ENCODE measurements at regions of chr15 and their contacts with region 1.

Region 1: GRCh38 chr15:70111203-70112073 is 13.7 kb upstream of the TLE3 start:
- DNase-seq: peak in 1 of 2 donors; percentile 44
- H3K4me3 ChIP-seq: peak overlapping the region in 2 of 3 donors; percentile 8 to 46
- H3K27ac ChIP-seq: peak overlapping the region; percentile 79 to 91
- H3K4me1 ChIP-seq: peaks cover 0 to 5% of the 10 kb centered on the region in 2 donors
- H3K27me3 ChIP-seq: no peaks in the 10 kb centered on the region
- CTCF ChIP-seq: no peak
- POLR2A ChIP-seq: no peak

Region 2: DNA sequence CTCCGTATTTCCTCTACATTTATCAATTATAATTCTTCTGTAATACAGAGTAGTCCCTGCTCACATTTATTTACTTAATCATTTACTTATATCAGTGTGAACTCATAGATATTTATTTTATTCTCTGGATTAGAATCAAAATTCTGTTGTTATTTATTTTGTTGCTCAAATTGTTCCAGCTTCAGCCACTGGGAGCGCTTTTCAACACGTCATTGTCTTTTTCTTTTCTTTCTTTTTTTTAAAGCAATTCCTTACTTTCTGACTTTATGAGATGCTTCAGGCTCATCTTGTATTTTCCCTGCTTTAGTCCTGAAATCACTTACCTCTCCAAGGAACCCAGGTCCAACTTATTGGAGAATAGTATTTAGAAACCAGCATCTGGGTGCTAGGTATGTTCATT is 897.7 kb before region 1 on chr15:
- intact Hi-C with region 1: no loop called
- DNase-seq: no peak
- H3K4me3 ChIP-seq: no peak overlapping the region
- H3K27ac ChIP-seq: no peak overlapping the region
- H3K4me1 ChIP-seq: no peaks in the 10 kb centered on the region
- H3K27me3 ChIP-seq: no peaks in the 10 kb centered on the region
- CTCF ChIP-seq: no peak
- POLR2A ChIP-seq: no peak

Region 3: DNA sequence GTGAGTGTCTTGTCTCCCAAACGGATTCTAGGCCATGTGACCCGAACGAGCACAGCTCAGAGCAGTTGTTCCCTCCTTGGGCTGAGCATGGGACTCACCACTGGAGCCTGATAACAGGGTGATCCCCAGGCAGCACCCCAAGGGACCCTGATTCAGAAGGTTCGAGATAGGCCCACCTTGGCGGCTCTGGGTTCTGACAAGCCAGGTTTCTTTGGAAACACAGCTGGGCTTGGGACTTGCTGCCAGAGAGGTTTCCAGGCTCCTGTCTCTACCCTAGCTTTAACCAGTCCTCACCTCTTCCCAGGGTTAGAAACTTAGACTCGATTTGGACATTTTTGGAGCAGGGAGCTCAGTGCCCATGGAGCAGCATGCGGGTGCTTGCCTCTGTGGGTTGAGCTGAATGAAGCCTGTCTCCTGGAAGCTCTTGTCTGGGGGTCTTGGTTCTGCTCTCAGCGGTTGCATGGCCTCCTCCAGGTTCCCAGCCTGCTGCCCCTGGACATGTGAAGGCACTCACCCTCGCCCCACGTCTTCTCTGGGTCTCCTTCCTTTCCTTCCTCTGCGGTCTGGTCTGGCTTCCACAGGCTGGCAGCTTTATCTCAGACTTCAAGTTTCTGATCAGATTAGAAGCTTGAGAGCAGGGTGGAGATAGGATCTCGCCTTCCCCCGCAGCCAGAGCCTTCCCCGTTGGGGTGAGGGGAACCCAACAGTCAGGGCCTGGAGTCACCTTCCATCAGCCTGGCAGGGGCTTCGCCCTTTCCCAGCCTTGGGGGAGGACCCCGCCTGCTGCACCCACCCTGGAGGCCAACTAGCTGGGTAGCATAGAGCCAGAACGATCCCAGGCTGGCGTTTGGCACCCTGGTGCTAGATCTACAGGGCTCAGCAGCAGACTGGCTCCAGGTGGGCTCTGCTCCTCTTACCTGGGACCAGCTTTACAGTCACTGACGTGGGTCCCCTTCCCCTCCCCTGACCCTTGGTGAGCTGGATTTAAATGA is 791.8 kb before region 1 on chr15:
- intact Hi-C with region 1: loop called (anchors 5 kb)
- DNase-seq: no peak
- H3K4me3 ChIP-seq: no peak overlapping the region
- H3K27ac ChIP-seq: no peak overlapping the region
- H3K4me1 ChIP-seq: no peaks in the 10 kb centered on the region
- H3K27me3 ChIP-seq: no peaks in the 10 kb centered on the region
- CTCF ChIP-seq: no peak
- POLR2A ChIP-seq: no peak